Calu3 (cell line): ENCODE measurements at regions of chr20 and their contacts with region 1.

Region 1: DNA sequence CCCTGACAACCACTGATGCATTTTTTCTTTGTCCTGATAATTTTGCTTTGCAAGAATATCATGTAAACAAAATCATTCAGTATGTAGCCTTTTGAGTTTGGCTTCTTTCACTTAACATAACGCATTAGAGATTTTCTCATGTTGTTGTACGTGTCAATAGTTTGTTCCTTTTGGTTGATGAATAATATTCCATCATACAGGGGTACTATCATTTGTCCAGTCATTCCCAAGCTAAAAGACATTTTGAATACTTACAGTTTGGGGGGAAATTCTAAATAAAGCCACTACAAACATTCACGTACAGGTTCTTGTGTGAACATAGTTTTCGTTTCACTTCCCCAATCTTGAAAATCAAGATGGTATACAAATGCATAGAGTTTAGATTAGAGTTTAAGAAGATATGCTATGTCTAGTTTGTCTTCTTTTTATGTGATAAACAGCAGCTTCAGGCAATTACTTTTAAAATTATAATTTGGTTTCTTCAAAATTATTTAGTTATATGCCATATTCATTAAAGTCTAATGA is 5.2 kb downstream of the HAO1 start:
- DNase-seq: no peak
- H3K4me3 Mint-ChIP-seq: no peak overlapping the region
- H3K27ac Mint-ChIP-seq: no peak overlapping the region
- H3K4me1 Mint-ChIP-seq: no peaks in the 10 kb centered on the region
- H3K27me3 Mint-ChIP-seq: no peaks in the 10 kb centered on the region
- CTCF ChIP-seq: no peak

Region 2: DNA sequence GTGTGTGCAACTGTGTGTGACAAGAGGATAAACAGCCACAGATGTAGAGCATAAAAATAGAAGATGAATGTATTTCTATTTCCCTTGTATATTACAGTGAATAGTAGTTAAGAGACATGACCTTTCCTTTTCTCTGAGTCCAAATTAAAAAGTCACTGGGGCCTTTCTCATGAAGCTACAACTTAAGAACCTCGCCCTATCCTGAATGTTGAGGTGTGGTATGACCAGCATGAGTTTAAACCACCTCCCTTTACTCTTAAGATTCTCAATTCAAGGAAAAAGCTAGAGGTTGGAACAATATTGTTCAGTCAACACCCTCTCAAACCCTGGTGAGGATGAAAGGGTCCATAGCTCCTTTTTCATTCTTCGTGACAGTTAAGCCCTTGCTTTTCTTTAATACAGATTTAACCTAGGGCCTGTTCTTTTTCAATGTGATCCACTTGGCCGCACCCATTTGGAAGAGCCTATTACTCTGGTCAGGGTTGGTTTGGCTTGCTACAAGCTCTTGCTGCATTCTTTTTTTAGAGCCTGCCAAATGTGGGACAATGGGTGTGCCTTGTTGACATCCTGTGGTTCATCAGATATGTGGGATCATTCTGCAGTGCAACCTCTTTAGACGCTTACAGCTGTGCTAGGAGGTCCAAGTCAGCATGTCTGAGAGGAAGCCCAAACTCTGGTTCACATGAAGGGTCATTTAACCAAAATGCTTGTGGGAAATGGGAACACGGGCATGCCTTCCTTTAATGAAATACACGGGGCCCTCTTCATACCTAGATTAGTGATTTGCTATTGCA is 284.8 kb before region 1 on chr20:
- CTCF ChIA-PET with region 1: no interaction called
- intact Hi-C with region 1: no loop called
- DNase-seq: no peak
- H3K4me3 Mint-ChIP-seq: no peak overlapping the region
- H3K27ac Mint-ChIP-seq: no peak overlapping the region
- H3K4me1 Mint-ChIP-seq: no peaks in the 10 kb centered on the region
- H3K27me3 Mint-ChIP-seq: peaks cover 15% of the 10 kb centered on the region
- CTCF ChIP-seq: no peak

Region 3: GRCh38 chr20:7754102-7754501 is 181.0 kb before region 1 on chr20:
- CTCF ChIA-PET with region 1: no interaction called
- intact Hi-C with region 1: no loop called
- DNase-seq: no peak
- H3K4me3 Mint-ChIP-seq: no peak overlapping the region
- H3K27ac Mint-ChIP-seq: no peak overlapping the region
- H3K4me1 Mint-ChIP-seq: peaks cover 8% of the 10 kb centered on the region
- H3K27me3 Mint-ChIP-seq: no peaks in the 10 kb centered on the region
- CTCF ChIP-seq: no peak

Region 4: GRCh38 chr20:7897781-7898364 is 37.2 kb before region 1 on chr20:
- CTCF ChIA-PET with region 1: no interaction called
- intact Hi-C with region 1: no loop called
- DNase-seq: no peak
- H3K4me3 Mint-ChIP-seq: no peak overlapping the region
- H3K27ac Mint-ChIP-seq: no peak overlapping the region
- H3K4me1 Mint-ChIP-seq: peaks cover 15% of the 10 kb centered on the region
- H3K27me3 Mint-ChIP-seq: no peaks in the 10 kb centered on the region
- CTCF ChIP-seq: no peak

Region 5: GRCh38 chr20:7989379-7989778 is 54.3 kb after region 1 on chr20:
- CTCF ChIA-PET with region 1: no interaction called
- intact Hi-C with region 1: loop called (anchors 5 kb)
- DNase-seq: no peak
- H3K4me3 Mint-ChIP-seq: no peak overlapping the region
- H3K27ac Mint-ChIP-seq: no peak overlapping the region
- H3K4me1 Mint-ChIP-seq: no peaks in the 10 kb centered on the region
- H3K27me3 Mint-ChIP-seq: no peaks in the 10 kb centered on the region
- CTCF ChIP-seq: no peak

Region 6: DNA sequence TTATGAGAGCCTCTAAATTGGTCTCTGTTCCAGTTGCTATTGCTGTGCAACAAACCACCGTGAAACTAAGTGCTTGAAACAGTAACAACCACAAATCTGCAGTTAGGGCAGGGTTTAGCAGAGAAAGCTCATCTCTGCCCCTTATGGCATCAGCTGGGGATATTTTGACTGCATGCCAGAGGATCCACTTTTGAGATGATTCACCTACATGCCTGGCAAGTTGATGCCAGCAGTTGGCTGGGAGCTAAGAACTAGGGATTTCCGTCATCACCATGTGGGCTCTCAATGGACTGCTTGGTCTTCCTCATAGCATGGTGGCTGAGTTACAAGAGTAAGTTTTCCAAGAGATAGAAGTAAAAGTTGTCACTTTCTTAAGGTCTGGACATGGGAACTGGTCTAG is 1168.9 kb after region 1 on chr20:
- CTCF ChIA-PET with region 1: interaction called, 10 read pairs
- intact Hi-C with region 1: no loop called
- DNase-seq: no peak
- H3K4me3 Mint-ChIP-seq: no peak overlapping the region
- H3K27ac Mint-ChIP-seq: no peak overlapping the region
- H3K4me1 Mint-ChIP-seq: no peaks in the 10 kb centered on the region
- H3K27me3 Mint-ChIP-seq: no peaks in the 10 kb centered on the region
- CTCF ChIP-seq: no peak